ENCODE measurements at regions of chr3 and their contacts with region 1.

Region 1: DNA sequence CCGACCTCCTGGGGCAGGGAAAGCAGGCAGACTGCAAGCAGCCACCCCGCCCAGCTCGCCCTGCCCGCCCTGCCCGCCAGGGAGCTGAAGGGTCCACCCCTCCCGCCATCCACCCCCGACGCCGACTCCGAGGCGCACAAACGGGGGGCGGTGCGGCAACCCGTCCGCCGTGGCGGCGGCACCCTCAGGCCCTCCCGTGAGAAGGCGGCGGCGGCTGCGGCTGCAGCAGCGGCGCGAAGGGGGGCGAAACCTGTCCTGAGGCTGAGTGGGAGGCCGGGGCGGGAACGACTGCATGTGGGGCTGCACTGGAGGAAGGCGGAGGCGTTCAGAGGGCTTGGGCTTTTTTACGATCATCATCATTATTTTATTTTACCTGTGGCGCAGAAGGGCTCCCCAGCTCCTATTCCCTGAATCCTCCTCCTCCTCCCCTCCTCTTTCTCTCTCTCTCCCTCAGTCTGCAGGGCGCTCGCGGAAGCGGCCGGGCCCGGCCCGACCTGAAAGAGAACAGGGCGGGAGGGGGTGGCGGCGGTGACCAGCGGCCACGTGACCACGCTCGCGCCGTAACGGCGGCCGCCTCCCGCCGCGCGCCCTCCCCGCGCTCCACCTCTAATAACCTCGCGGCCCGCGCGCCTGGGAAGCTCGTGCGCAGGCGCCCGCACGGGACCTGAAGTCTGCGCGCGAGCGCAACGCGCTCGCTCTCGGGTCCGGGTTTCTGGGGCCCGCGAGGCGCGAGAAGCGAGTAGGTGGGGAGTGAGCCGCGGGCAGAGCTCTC is at the start of gene TBC1D5:
- DNase-seq: peak; percentile 78 to 97 (median 88)
- ATAC-seq: peak; percentile 91
- H3K4me3 ChIP-seq: peak within 1 kb of the TSS; percentile 60 to 90
- H3K4me3 Mint-ChIP-seq: peak within 1 kb of the TSS; percentile 91
- H3K27ac ChIP-seq: peak within 1 kb of the TSS; percentile 82 to 87
- H3K27ac Mint-ChIP-seq: peak within 1 kb of the TSS; percentile 84
- H3K4me1 ChIP-seq: peaks cover 16% of the 10 kb centered on the region
- H3K4me1 Mint-ChIP-seq: peaks cover 39% of the 10 kb centered on the region
- H3K27me3 ChIP-seq: no peaks in the 10 kb centered on the region
- H3K27me3 Mint-ChIP-seq: no peaks in the 10 kb centered on the region
- CTCF ChIP-seq: no peak
- total RNA-seq, gene TBC1D5: 29.7 to 30.0 TPM

Region 2: GRCh38 chr3:15859507-15860013 is 1882.7 kb before region 1 on chr3:
- CTCF ChIA-PET with region 1: no interaction called
- POLR2A ChIA-PET with region 1: no interaction called
- intact Hi-C with region 1: loop called in 1 of 2 experiments (anchors 5 kb)
- DNase-seq: peak; percentile 42 to 88 (median 73)
- ATAC-seq: peak; percentile 78
- H3K4me3 ChIP-seq: peak overlapping the region; percentile 73 to 86
- H3K4me3 Mint-ChIP-seq: peak overlapping the region; percentile 97
- H3K27ac ChIP-seq: peak overlapping the region in 1 of 2 experiments; percentile 46
- H3K27ac Mint-ChIP-seq: peak overlapping the region; percentile 95
- H3K4me1 ChIP-seq: peaks cover 20% of the 10 kb centered on the region
- H3K4me1 Mint-ChIP-seq: peaks cover 35% of the 10 kb centered on the region
- H3K27me3 ChIP-seq: no peaks in the 10 kb centered on the region
- H3K27me3 Mint-ChIP-seq: no peaks in the 10 kb centered on the region
- CTCF ChIP-seq: no peak

Region 3: DNA sequence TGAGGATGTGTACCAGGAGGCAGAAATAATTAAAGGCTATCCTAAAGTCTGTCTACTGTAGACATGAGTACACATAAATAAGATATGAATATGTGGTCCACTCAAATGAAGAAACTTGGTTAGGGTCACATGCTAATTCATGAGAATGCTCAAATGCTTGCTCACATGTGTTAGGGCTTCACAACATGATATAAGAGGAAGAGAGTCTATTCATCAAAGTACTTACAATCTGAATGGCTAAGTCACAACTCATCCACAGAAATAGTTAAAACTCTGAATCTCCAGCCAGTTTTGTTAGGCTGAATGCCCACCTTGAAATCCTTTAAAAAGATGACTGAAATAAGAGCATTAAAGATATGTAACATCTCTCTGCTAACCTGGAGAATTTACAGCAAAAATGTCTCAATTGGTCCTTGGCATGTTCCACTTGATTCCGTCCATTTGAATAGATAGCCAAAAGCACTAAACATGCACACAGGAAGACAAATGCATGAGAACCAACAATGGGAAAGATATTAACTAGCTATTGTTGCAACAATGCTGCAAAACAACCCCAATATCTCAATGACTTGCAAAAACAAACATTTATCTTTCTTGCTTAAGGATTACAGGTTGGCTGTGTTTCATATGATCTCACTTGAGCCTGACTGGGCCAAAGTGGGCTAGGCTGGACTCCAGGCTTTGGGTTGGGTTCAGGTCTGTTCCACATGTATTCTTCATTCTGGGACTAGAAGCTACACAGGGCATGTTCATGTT is 10.8 kb after region 1 on chr3:
- CTCF ChIA-PET with region 1: no interaction called
- POLR2A ChIA-PET with region 1: interaction called, 4 read pairs
- intact Hi-C with region 1: loop called in 1 of 2 experiments (anchors 1 kb)
- DNase-seq: no peak
- ATAC-seq: no peak
- H3K4me3 ChIP-seq: no peak overlapping the region
- H3K4me3 Mint-ChIP-seq: no peak overlapping the region
- H3K27ac ChIP-seq: no peak overlapping the region
- H3K27ac Mint-ChIP-seq: no peak overlapping the region
- H3K4me1 ChIP-seq: peaks cover 5% of the 10 kb centered on the region
- H3K4me1 Mint-ChIP-seq: peaks cover 20% of the 10 kb centered on the region
- H3K27me3 ChIP-seq: no peaks in the 10 kb centered on the region
- H3K27me3 Mint-ChIP-seq: no peaks in the 10 kb centered on the region
- CTCF ChIP-seq: no peak

Region 4: DNA sequence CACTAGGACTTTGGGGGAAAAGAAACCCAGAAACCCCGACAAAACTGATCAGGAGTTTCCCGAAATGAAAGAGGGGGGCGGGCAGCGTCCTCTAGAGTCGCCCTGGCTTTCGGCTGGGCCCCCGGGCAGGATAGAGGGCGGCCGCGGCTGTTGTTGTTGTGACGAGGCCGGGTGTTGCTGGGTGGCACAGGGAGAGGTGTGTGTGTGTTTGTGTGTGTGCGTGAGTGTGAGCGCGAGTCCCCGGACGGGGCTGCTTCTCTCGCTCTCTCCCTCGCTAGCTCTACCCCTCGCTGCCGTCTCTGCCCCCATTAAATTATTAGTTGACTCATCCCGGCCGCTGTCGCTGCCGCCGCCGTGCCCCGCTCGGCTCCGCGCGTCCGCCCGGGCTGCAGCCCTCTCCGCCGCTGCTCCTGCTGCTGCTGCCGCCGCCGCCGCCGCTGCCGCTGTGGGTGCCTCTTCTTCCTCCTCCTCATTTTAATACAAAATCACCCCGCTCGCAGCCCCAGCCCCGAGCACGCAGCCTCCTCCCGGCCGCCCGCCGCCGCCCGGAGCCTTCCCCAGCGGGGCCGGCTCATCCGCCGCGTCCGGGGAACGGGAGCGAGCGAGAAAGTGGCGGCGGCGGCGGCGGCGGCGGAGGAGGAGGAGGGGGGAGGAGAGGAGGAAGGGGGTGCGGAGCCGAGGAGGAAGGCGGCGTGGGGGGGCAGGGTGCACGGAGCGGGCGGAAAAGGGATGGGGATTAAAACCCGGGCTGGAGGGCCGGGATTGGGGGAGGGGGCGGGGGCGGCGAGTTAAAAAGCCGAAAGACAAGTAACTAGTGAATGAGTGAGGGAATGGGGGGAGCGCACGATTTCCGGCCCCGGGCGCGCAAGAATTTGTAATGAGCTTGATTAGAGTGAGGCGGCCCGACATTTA is 682.7 kb after region 1 on chr3 and contains the start of gene SATB1:
- CTCF ChIA-PET with region 1: no interaction called
- POLR2A ChIA-PET with region 1: no interaction called
- intact Hi-C with region 1: loop called in 1 of 2 experiments (anchors 10 kb)
- DNase-seq: peak; percentile 46 to 83 (median 76)
- ATAC-seq: peak; percentile 42
- H3K4me3 ChIP-seq: peak within 1 kb of the TSS; percentile 82 to 84
- H3K4me3 Mint-ChIP-seq: peak within 1 kb of the TSS; percentile 91
- H3K27ac ChIP-seq: peak within 1 kb of the TSS; percentile 76 to 83
- H3K27ac Mint-ChIP-seq: peak within 1 kb of the TSS; percentile 95
- H3K4me1 ChIP-seq: peaks cover 55% of the 10 kb centered on the region
- H3K4me1 Mint-ChIP-seq: peaks cover 76% of the 10 kb centered on the region
- H3K27me3 ChIP-seq: no peaks in the 10 kb centered on the region
- H3K27me3 Mint-ChIP-seq: no peaks in the 10 kb centered on the region
- CTCF ChIP-seq: no peak
- total RNA-seq, gene SATB1: 333 to 346 TPM

Region 5: GRCh38 chr3:19146685-19147650 is 1404.7 kb after region 1 on chr3:
- CTCF ChIA-PET with region 1: no interaction called
- POLR2A ChIA-PET with region 1: no interaction called
- intact Hi-C with region 1: loop called in 1 of 2 experiments (anchors 10 kb)
- DNase-seq: peak; percentile 33 to 87 (median 68)
- ATAC-seq: peak; percentile 72
- H3K4me3 ChIP-seq: peak overlapping the region; percentile 70 to 75
- H3K4me3 Mint-ChIP-seq: peak overlapping the region; percentile 93
- H3K27ac ChIP-seq: peak overlapping the region; percentile 40 to 47
- H3K27ac Mint-ChIP-seq: peak overlapping the region; percentile 88
- H3K4me1 ChIP-seq: peaks cover 21% of the 10 kb centered on the region
- H3K4me1 Mint-ChIP-seq: peaks cover 14% of the 10 kb centered on the region
- H3K27me3 ChIP-seq: peaks cover 0 to 4% of the 10 kb centered on the region in 2 experiments
- H3K27me3 Mint-ChIP-seq: peaks cover 21% of the 10 kb centered on the region
- CTCF ChIP-seq: peak; percentile 54

Measured in CD8-positive, alpha-beta T cell (primary cell).